Lower leg skin (tissue), 4 donors: ENCODE measurements at regions of chr3 and their contacts with region 1.

Region 1: GRCh38 chr3:27171113-27171512 is 198.1 kb downstream of the NEK10 start:
- DNase-seq: no peak
- H3K4me3 ChIP-seq: no peak overlapping the region
- CTCF ChIP-seq: no peak
- POLR2A ChIP-seq: no peak

Region 2: DNA sequence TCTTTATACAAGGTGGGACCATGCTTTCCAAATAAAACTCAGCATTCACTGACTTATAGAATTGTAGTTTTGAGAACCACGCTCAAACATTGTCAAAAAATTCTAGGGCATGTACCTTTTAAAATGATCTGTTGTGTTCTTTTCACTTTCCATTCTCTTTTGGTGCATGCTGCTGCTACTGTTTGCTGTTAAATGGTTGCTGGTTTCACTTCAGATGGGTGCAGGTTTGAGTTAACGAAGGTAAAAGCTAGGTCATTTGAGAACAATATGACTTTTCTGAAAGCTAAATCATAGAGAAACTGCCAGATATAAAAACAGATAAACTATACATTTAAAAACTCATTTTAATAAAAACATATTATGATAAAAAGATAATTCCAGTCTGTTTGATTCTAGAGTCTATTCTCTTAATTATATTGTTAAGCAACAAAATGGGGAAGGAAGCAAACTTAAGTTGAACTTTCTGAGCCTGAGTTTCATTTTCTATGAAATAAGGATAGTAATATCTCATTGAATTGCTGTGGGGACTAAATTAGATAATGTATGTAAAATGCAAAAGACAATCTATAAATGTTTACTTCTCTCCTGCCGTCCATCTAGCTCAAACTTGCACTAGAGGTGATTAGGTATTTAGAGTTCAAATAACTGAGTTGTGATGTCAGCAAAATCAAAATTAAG is 1298.8 kb before region 1 on chr3:
- intact Hi-C with region 1: no loop called
- DNase-seq: no peak
- H3K4me3 ChIP-seq: no peak overlapping the region
- CTCF ChIP-seq: no peak
- POLR2A ChIP-seq: no peak

Region 3: GRCh38 chr3:26279091-26279490 is 892.0 kb before region 1 on chr3:
- intact Hi-C with region 1: loop called (anchors 5 kb)
- DNase-seq: no peak
- H3K4me3 ChIP-seq: no peak overlapping the region
- CTCF ChIP-seq: no peak
- POLR2A ChIP-seq: no peak

Region 4: GRCh38 chr3:26712211-26713026 is 458.7 kb before region 1 on chr3:
- intact Hi-C with region 1: no loop called
- DNase-seq: no peak
- H3K4me3 ChIP-seq: no peak overlapping the region
- CTCF ChIP-seq: no peak
- POLR2A ChIP-seq: no peak

Region 5: GRCh38 chr3:27127195-27127594 is 43.9 kb before region 1 on chr3:
- intact Hi-C with region 1: no loop called
- DNase-seq: no peak
- H3K4me3 ChIP-seq: no peak overlapping the region
- CTCF ChIP-seq: no peak
- POLR2A ChIP-seq: no peak